ENCODE measurements at regions of chr6 and their contacts with region 1.

Region 1: GRCh38 chr6:5260661-5261544 is at the starts of genes FARS2 and LYRM4:
- DNase-seq: peak; percentile 49 to 91
- H3K4me3 ChIP-seq: peak within 1 kb of the TSS; percentile 92 to 99
- H3K27ac ChIP-seq: peak within 1 kb of the TSS; percentile 98
- H3K4me1 ChIP-seq: peaks cover 0 to 11% of the 10 kb centered on the region in 2 donors
- H3K27me3 ChIP-seq: no peaks in the 10 kb centered on the region
- CTCF ChIP-seq: no peak
- total RNA-seq, gene FARS2: 17.6 TPM
- total RNA-seq, gene LYRM4: 10.5 TPM

Region 2: GRCh38 chr6:5003604-5004372 is 257.1 kb before region 1 on chr6 and contains the start of gene RPP40:
- intact Hi-C with region 1: loop called (anchors 2 kb)
- DNase-seq: peak; percentile 93 to 99
- H3K4me3 ChIP-seq: peak within 1 kb of the TSS; percentile 56 to 71
- H3K27ac ChIP-seq: peak within 1 kb of the TSS; percentile 92 to 95
- H3K4me1 ChIP-seq: no peaks in the 10 kb centered on the region
- H3K27me3 ChIP-seq: no peaks in the 10 kb centered on the region
- CTCF ChIP-seq: peak; percentile 72 to 93 (median 93)
- total RNA-seq, gene RPP40: not detected

Region 3: DNA sequence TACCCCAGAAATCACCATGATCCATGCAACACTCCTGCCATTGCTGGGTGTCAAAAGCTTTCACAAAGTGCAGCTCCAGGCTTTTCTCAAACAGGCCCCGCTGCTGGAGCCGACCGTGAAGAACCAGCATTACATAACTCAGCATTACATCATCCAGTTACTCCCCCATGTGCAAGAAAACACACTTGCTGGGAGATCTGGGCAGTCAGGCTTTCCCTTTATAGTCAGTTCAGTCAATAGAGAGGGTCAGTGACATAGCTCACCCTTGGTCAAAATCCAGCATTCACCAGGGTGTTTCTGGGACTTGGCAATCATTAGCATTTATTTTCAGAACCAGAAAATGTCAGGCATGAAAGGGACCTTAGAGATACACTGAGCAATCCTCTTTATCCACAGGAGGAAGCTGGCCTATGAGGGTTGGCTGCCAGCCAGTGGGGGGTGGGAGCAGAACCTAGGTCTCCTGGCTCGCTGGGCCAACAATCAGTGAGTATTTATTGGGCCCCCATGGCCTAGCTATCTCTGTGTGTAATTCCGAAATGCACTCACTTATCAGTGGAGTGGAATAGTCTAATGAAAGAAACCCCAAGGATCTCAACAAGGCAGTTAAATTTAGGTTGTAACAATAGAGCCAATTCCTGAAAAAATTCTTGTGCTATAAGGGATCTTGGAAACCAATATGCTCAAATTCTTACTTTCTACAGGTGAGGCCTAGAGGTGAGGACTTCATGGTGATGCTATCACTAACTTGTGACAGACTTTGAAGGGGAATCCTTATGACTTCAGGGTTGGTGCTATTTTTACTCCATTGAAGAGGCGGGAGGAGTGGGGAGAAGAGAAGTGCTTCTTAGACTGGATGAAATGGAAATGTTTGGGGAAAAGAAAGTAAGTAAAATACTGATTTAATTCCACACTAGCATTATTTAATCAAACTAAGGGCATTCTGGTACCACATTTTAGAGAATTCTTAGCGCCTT is 54.7 kb before region 1 on chr6:
- intact Hi-C with region 1: loop called (anchors 5 kb)
- DNase-seq: peak in 1 of 2 donors; percentile 72
- H3K4me3 ChIP-seq: peak overlapping the region; percentile 16 to 22
- H3K27ac ChIP-seq: peak overlapping the region; percentile 66 to 87
- H3K4me1 ChIP-seq: peaks cover 27 to 29% of the 10 kb centered on the region in 2 donors
- H3K27me3 ChIP-seq: no peaks in the 10 kb centered on the region
- CTCF ChIP-seq: no peak

Region 4: DNA sequence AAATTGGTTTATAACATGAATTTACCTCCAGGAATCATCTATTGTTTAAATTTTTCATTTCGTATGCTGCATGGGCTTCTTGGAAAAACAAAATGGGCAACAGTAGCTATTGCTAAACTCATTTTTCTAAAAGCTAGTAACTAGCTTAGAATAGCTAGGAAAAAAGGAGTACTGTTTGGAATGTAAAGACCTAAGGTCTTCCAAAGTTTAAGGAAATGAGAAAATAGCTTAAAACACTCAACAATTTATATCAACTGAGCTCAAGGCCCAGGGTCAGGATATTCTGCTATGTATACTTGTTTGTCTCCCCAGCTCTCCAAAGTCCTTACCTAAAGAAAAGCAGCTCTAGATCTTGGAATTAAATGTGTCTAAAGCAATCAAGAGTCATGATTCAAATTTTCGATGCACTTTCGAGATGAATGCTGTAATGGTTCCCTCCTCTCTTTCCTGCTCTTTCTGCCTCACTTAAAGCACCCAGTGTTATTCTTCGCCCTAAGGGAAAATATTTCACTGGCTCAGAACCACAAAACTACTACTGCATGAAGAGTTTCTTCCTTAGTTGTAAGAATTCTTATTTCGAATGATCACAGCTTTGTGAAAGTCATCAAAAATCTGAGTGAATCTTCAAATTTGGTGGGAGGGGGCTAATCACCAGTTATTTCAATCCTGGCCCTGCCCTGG is 41.8 kb before region 1 on chr6:
- intact Hi-C with region 1: no loop called
- DNase-seq: no peak
- H3K4me3 ChIP-seq: no peak overlapping the region
- H3K27ac ChIP-seq: peak overlapping the region in 1 of 2 donors; percentile 11
- H3K4me1 ChIP-seq: peaks cover 4 to 12% of the 10 kb centered on the region in 2 donors
- H3K27me3 ChIP-seq: no peaks in the 10 kb centered on the region
- CTCF ChIP-seq: no peak

Region 5: DNA sequence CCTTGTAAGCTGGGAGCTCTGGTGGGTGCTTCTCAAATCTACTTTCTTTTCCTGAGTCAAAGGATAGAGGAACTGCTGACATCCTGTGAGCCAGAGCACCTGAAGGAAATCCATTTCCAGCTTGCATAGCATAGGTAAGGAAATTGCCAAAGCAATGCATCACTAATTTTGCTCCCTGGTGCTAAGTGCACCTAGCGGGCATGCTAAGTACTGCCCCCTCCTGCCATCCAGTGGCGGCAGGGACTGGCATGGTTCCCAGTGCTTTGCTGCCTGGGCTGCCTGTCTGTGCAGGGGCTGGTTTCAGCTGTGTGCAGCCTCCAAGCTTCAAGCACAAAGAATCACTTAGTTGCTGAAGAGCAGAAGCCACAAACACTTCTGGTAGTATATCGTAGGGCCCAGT is 64.3 kb after region 1 on chr6:
- intact Hi-C with region 1: no loop called
- DNase-seq: no peak
- H3K4me3 ChIP-seq: no peak overlapping the region
- H3K27ac ChIP-seq: no peak overlapping the region
- H3K4me1 ChIP-seq: no peaks in the 10 kb centered on the region
- H3K27me3 ChIP-seq: no peaks in the 10 kb centered on the region
- CTCF ChIP-seq: no peak

Region 6: DNA sequence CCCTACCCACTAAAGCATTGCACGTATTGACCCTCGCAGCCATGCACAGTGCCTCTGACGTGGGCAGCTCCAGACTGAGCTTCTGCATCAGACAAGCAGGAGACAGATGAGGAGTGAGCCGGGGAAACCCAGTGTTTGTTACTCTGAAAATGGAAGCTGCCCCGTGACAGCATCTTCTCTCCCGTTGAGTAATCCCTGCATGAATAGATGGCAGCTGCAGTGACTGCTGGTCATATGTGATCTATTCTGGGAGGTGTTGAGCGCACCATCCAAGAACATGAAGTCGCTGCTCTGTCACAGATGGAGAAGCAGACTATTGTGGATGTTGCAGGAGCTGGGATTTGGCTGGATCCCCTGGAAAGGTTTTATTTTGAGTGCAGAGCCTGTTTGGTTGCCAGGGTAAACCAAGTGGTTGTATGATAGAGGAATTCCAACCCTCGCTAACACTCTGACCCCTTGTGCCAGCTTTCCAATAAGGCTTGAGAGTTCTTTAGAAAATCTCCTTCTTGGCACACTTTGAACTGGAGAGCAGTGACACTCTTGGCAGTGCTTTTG is 503.6 kb after region 1 on chr6:
- intact Hi-C with region 1: loop called (anchors 5 kb)
- DNase-seq: peak; percentile 56 to 79
- H3K4me3 ChIP-seq: peak overlapping the region in 1 of 2 donors; percentile 52
- H3K27ac ChIP-seq: peak overlapping the region; percentile 81 to 90
- H3K4me1 ChIP-seq: peaks cover 8 to 40% of the 10 kb centered on the region in 2 donors
- H3K27me3 ChIP-seq: no peaks in the 10 kb centered on the region
- CTCF ChIP-seq: no peak